Caco-2 (cell line): ENCODE measurements at regions of chr19 and their contacts with region 1.

Region 1: DNA sequence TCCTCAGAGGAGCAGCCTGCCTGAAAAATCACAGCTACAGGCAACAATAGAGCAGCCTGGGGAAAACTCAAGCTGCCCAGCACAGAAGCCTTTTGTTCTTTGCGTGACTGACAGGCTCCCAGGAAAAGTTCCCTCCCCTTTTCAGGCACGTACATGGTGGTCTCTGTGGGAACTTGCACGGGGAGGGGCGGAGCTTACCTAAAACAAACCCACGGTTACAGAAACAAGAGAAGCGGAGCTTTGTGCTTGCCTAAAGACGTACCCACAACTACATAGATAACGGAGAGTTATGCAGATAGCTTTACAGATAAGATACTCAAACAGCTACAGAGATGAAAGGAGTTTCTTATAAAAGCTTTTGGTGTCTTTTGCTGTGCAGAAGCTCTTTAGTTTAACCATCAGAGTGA is 11.4 kb downstream of the ETFB start:
- DNase-seq: peak; percentile 91 to 96
- H3K4me3 ChIP-seq: no peak overlapping the region
- H3K4me3 Mint-ChIP-seq: peak overlapping the region; percentile 90
- H3K27ac Mint-ChIP-seq: peak overlapping the region; percentile 92
- H3K4me1 ChIP-seq: peaks cover 41% of the 10 kb centered on the region
- H3K4me1 Mint-ChIP-seq: peaks cover 46% of the 10 kb centered on the region
- H3K27me3 ChIP-seq: no peaks in the 10 kb centered on the region
- H3K27me3 Mint-ChIP-seq: no peaks in the 10 kb centered on the region
- CTCF ChIP-seq: no peak

Region 2: DNA sequence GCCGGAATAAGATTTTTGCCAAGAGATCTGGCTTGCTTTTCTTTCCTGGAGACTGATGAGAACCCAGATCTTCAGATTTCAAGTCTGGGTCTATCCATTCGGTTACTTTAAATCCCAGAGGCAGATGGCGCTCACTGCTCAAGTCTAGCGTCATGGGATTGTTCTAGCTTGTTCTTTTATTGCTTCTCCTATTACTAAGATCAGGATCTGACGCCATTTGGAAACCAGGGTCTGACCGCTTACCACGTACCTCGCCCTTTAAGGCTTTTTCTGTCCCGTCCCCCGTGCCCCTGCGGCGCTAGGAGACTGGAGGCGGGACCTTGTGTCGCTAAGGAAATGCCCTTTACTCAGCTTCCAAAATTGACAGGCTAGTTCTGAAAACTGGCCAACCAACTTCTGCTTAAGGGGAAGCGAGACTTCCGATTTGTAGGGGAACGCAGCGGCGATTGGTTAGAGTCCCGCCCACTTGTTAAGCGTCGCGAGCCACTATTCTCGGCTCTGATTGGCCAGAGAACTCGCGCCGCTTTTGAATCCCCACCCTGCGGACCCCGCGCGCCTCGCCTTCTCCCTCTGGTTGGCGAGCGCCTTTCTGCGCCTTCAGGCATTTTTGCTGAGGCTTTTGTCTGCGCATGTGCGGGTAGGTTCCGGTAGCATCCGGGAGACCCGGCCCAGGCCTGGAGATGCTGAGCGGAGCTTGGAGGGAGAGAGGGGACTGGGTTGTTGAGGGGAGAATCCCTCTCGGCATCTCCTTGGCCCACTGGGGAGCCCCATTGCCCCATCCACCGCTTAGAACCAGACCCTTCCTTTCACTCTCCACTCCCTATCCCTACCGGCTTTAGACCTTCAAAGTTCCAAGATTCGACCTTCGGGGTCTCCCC is 39.5 kb after region 1 on chr19:
- CTCF ChIA-PET with region 1: no interaction called
- POLR2A ChIA-PET with region 1: interaction called, 16 read pairs
- intact Hi-C with region 1: no loop called
- DNase-seq: peak; percentile 97 to 98
- H3K4me3 ChIP-seq: peak overlapping the region; percentile 74
- H3K4me3 Mint-ChIP-seq: peak overlapping the region; percentile 93
- H3K27ac Mint-ChIP-seq: peak overlapping the region; percentile 87
- H3K4me1 ChIP-seq: 0 out of 2 replicates have a peak, but pooled peaks cover 3% of the 10 kb centered on the region
- H3K4me1 Mint-ChIP-seq: peaks cover 6% of the 10 kb centered on the region
- H3K27me3 ChIP-seq: no peaks in the 10 kb centered on the region
- H3K27me3 Mint-ChIP-seq: no peaks in the 10 kb centered on the region
- CTCF ChIP-seq: peak in 1 of 2 experiments; percentile 1